ENCODE measurements at regions of chr4 and their contacts with region 1.

Region 1: GRCh38 chr4:20418861-20419451 is 167.3 kb downstream of the SLIT2 start:
- DNase-seq: peak; percentile 7
- H3K4me3 ChIP-seq: peak overlapping the region in 1 of 2 donors; percentile 7
- H3K27ac ChIP-seq: no peak overlapping the region
- H3K4me1 ChIP-seq: no peaks in the 10 kb centered on the region
- H3K27me3 ChIP-seq: no peaks in the 10 kb centered on the region
- CTCF ChIP-seq: peak in 3 of 4 experiments; percentile 43 to 69 (median 57)
- POLR2A ChIP-seq: no peak

Region 2: DNA sequence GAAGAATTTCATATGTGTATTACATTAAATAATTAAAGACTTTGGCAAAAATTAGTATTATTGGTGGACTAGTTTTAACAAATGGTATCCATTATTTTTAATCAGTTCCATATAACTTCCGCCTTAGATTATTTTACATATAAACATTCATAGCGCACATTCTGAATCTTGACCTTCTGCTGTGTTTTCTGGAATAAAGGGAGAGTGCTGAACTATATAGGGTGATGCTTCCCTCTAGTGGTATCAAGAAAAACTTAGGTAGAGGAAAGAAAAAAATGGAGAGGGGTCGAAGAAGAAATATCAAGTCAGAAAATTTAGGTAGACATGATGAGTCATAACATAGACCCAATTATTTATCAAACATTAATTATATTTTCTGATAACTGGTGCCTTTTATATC is 125.7 kb after region 1 on chr4:
- intact Hi-C with region 1: loop called (anchors 5 kb)
- DNase-seq: no peak
- H3K4me3 ChIP-seq: no peak overlapping the region
- H3K27ac ChIP-seq: no peak overlapping the region
- H3K4me1 ChIP-seq: no peaks in the 10 kb centered on the region
- H3K27me3 ChIP-seq: no peaks in the 10 kb centered on the region
- CTCF ChIP-seq: peak in 3 of 4 experiments; percentile 40 to 73 (median 67)
- POLR2A ChIP-seq: no peak